ENCODE measurements at regions of chr2 and their contacts with region 1.

Region 1: DNA sequence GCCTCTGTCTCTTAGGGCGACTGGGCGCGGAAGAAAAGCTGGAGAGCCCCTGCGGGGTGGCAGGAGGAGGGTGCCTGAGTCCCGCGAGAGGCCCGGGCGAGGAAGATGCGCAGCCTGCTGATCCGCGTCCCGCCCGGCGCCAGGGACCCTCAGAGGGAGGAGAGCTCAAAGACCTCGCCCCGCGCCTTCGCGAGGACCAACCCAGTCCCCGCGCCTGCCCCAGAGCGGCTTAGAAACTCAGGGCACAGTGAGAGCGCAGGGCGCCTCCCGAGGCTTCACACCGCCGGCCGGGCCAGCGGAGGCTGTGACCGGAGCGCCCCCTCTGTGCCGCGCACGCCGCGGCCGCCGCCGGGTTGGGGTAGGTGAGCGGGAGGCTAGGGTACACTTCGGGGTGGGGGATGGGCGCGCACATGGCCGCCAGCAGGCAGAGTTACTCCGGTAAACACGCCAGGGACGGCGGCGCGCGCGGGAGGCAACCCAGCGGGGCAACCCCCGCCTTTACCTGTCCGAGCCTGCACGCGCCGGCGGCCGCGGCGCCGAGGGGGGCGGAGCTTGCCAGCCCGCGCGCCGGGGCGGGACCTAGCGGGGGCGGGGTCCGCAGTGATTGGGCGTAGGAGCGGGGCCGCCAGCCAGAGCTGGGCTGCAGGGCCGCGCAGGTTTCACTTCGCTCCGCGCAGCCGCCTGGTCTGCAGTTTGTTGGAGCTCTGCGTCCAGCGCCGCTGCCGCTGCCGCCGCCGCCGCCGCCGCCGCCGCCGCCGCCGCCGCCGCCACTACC is at the start of gene BCL2L11:
- DNase-seq: peak; percentile 98
- ATAC-seq: peak; percentile 74
- H3K4me3 Mint-ChIP-seq: peak within 1 kb of the TSS; percentile 97
- H3K27ac Mint-ChIP-seq: peak within 1 kb of the TSS; percentile 89
- H3K4me1 Mint-ChIP-seq: peaks cover 50% of the 10 kb centered on the region
- H3K27me3 Mint-ChIP-seq: peaks cover 5% of the 10 kb centered on the region
- CTCF ChIP-seq: no peak
- total RNA-seq, gene BCL2L11: 205 and 221 TPM in 2 replicates

Region 2: GRCh38 chr2:110677530-110678456 is 442.6 kb before region 1 on chr2 and contains the start of gene BUB1:
- CTCF ChIA-PET with region 1: no interaction called
- POLR2A ChIA-PET with region 1: no interaction called
- intact Hi-C with region 1: loop called (anchors 5 kb)
- DNase-seq: peak; percentile 89
- ATAC-seq: peak; percentile 92
- H3K4me3 Mint-ChIP-seq: peak within 1 kb of the TSS; percentile 96
- H3K27ac Mint-ChIP-seq: peak within 1 kb of the TSS; percentile 97
- H3K4me1 Mint-ChIP-seq: peaks cover 34% of the 10 kb centered on the region
- H3K27me3 Mint-ChIP-seq: no peaks in the 10 kb centered on the region
- CTCF ChIP-seq: no peak
- total RNA-seq, gene BUB1: 5.9 and 6.2 TPM in 2 replicates

Region 3: GRCh38 chr2:111054791-111055691 is 65.4 kb before region 1 on chr2:
- CTCF ChIA-PET with region 1: interaction called, 3 read pairs
- POLR2A ChIA-PET with region 1: interaction called, 9 read pairs
- intact Hi-C with region 1: loop called (anchors 2 kb)
- DNase-seq: no peak
- ATAC-seq: peak; percentile 83
- H3K4me3 Mint-ChIP-seq: peak overlapping the region; percentile 16
- H3K27ac Mint-ChIP-seq: peak overlapping the region; percentile 64
- H3K4me1 Mint-ChIP-seq: peaks cover 68% of the 10 kb centered on the region
- H3K27me3 Mint-ChIP-seq: no peaks in the 10 kb centered on the region
- CTCF ChIP-seq: no peak

Region 4: GRCh38 chr2:111148925-111149324 is 28.5 kb after region 1 on chr2:
- CTCF ChIA-PET with region 1: interaction called, 4 read pairs
- POLR2A ChIA-PET with region 1: interaction called, 24 read pairs
- intact Hi-C with region 1: no loop called
- DNase-seq: no peak
- ATAC-seq: no peak
- H3K4me3 Mint-ChIP-seq: no peak overlapping the region
- H3K27ac Mint-ChIP-seq: no peak overlapping the region
- H3K4me1 Mint-ChIP-seq: peaks cover 12% of the 10 kb centered on the region
- H3K27me3 Mint-ChIP-seq: no peaks in the 10 kb centered on the region
- CTCF ChIP-seq: no peak

Region 5: GRCh38 chr2:111209045-111209514 is 88.6 kb after region 1 on chr2:
- CTCF ChIA-PET with region 1: no interaction called
- POLR2A ChIA-PET with region 1: interaction called, 31 read pairs
- intact Hi-C with region 1: loop called (anchors 2 kb)
- DNase-seq: no peak
- ATAC-seq: peak; percentile 91
- H3K4me3 Mint-ChIP-seq: peak overlapping the region; percentile 35
- H3K27ac Mint-ChIP-seq: peak overlapping the region; percentile 80
- H3K4me1 Mint-ChIP-seq: peaks cover 37% of the 10 kb centered on the region
- H3K27me3 Mint-ChIP-seq: no peaks in the 10 kb centered on the region
- CTCF ChIP-seq: no peak

Region 6: DNA sequence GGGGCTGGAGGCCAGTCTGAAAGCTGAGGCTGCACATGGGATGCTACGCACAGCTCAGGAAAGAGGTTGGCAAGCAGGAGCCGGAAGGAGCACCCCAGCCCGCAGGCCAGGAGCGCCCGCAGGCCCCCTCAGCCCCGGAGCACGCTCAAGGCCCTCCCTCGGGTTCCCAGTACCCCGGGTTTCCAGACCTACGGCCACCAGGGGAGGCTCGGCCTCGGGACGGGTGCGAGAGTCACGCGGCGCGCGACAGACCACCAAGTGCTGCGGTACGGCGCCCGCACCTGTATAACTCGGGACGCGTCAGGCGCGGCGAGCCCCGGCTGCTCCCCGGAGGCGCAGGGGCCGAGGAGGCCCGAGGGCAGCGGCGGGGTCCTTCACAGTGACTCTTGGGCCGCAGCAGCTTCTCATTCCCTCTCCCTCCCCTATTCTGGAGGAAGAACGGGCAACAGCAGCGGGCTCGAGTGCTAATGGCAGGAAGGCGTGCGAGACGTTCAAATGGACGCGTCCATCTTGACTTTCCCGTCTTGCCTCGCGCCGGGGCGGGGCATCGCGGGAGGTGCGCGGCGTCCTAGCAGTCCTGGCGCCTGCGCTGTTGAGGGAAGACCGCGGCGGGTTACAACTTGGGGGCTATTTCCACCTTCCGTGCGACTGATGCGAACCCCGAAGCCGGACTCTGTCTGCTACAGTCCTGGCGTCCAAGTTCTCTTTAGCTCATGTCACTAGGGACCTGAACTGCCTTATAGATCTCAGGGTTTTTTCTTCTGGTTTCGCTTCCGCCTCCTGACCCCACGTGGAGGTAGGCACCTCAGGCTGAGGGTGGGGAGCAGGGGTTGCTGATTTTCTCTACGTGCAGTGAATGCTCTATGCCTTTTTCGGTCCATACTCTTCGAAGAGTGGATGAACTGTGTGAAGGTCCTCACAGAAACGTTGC is 763.5 kb after region 1 on chr2 and contains the start of gene ANAPC1:
- CTCF ChIA-PET with region 1: no interaction called
- POLR2A ChIA-PET with region 1: no interaction called
- intact Hi-C with region 1: loop called (anchors 5 kb)
- DNase-seq: peak; percentile 79
- ATAC-seq: peak; percentile 91
- H3K4me3 Mint-ChIP-seq: peak within 1 kb of the TSS; percentile 92
- H3K27ac Mint-ChIP-seq: peak within 1 kb of the TSS; percentile 94
- H3K4me1 Mint-ChIP-seq: peaks cover 11% of the 10 kb centered on the region
- H3K27me3 Mint-ChIP-seq: no peaks in the 10 kb centered on the region
- CTCF ChIP-seq: no peak
- total RNA-seq, gene ANAPC1: 74.0 and 88.1 TPM in 2 replicates